ENCODE measurements at regions of chr2 and their contacts with region 1.

Region 1: GRCh38 chr2:32946314-32947075 is at the start of gene LTBP1:
- DNase-seq: peak in 9 of 10 donors; percentile 49 to 84 (median 58)
- H3K4me3 ChIP-seq: peak within 1 kb of the TSS; percentile 48 to 87 (median 72)
- H3K27ac ChIP-seq: peak within 1 kb of the TSS in 46 of 59 donors; percentile 3 to 85 (median 64)
- H3K27me3 ChIP-seq: peaks cover 0 to 7% (median 0%) of the 10 kb centered on the region in 45 donors
- CTCF ChIP-seq: peak in 55 of 56 donors; percentile 28 to 84 (median 69)
- total RNA-seq, gene LTBP1: 6.9 to 47.1 (median 14.7) TPM

Region 2: GRCh38 chr2:32553829-32554432 is 392.6 kb before region 1 on chr2:
- intact Hi-C with region 1: loop called in 1 of 2 experiments (anchors 10 kb)
- DNase-seq: no peak
- H3K4me3 ChIP-seq: no peak overlapping the region
- H3K27ac ChIP-seq: peak overlapping the region in 13 of 59 donors; percentile 5 to 61 (median 33)
- H3K27me3 ChIP-seq: no peaks in the 10 kb centered on the region
- CTCF ChIP-seq: peak; percentile 66 to 96 (median 82)

Region 3: DNA sequence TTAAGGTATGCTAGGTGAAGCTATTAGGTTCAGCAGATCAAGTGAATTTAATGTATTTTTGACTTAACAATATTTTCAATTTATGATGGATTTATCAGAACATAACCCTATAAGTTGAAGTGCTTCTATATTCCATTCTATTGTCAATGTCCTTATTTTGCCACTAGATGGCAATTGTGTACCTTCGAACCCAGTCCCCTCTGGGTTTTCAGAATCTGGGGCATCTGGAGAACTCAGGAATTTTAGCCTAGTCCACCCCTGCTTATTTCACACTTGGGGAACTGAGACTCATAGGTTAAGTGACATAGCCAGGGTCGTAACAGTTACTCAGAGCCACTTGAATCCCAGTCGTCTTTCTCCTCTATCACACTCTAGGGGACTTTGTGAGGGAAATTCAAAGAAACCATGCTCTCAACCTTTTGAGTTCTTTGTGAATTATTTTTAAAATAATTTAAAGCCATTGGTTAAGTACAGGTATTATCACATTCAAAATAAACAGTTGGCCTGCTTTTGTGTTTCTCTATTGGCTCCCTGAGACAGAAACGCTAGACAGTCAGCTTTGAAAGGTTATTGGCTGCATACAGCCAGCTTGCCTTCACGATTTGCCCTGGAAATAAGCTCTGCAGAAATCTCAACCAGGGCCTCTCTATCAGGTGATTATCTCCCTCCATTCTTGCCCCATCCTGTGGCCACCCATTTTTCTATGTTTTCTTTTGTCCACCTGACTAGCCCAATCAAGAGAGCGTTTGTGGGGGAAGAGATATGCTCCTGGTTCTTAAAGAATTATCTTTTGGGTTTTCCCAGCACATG is 173.7 kb before region 1 on chr2:
- intact Hi-C with region 1: loop called (anchors 1 to 5 kb)
- DNase-seq: peak in 1 of 10 donors; percentile 16
- H3K4me3 ChIP-seq: no peak overlapping the region
- H3K27ac ChIP-seq: peak overlapping the region in 2 of 59 donors; percentile 24 to 32
- H3K27me3 ChIP-seq: no peaks in the 10 kb centered on the region
- CTCF ChIP-seq: peak; percentile 65 to 95 (median 85)

Region 4: DNA sequence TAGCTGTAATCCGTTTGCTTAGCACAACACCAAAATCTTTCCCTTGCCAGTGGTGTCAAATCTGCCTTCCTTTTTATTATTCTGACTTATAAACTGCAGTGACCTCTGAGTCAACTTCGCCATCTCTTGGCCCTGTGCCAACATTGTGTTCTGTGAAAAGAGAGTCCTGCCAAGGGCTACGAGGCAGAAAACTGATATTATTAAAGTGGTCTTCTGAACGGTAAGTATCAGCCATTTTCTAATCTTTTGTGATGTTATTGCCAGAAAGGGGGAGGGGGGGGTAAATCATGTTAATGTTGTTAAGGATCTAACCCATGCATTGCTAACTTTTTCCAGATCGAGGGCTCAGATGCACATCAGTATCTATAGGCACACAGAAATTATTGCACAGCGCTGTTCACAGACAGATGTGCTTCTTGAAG is 121.2 kb before region 1 on chr2:
- intact Hi-C with region 1: loop called in 1 of 2 experiments (anchors 5 kb)
- DNase-seq: peak in 4 of 10 donors; percentile 28 to 65 (median 50)
- H3K4me3 ChIP-seq: peak overlapping the region in 49 of 59 donors; percentile 9 to 65 (median 34)
- H3K27ac ChIP-seq: peak overlapping the region in 57 of 59 donors; percentile 3 to 92 (median 79)
- H3K27me3 ChIP-seq: no peaks in the 10 kb centered on the region
- CTCF ChIP-seq: peak in 1 of 56 donors; percentile 15

Region 5: GRCh38 chr2:32882816-32883810 is 63.4 kb before region 1 on chr2:
- intact Hi-C with region 1: loop called in 1 of 2 experiments (anchors 5 kb)
- DNase-seq: no peak
- H3K4me3 ChIP-seq: peak overlapping the region in 1 of 59 donors; percentile 17
- H3K27ac ChIP-seq: no peak overlapping the region
- H3K27me3 ChIP-seq: no peaks in the 10 kb centered on the region
- CTCF ChIP-seq: no peak

Region 6: GRCh38 chr2:32993005-32993539 is 46.6 kb after region 1 on chr2:
- intact Hi-C with region 1: no loop called
- DNase-seq: no peak
- H3K4me3 ChIP-seq: no peak overlapping the region
- H3K27ac ChIP-seq: no peak overlapping the region
- H3K27me3 ChIP-seq: no peaks in the 10 kb centered on the region
- CTCF ChIP-seq: no peak

Region 7: GRCh38 chr2:33023728-33024500 is 77.4 kb after region 1 on chr2:
- intact Hi-C with region 1: no loop called
- DNase-seq: no peak
- H3K4me3 ChIP-seq: no peak overlapping the region
- H3K27ac ChIP-seq: no peak overlapping the region
- H3K27me3 ChIP-seq: peaks cover 0 to 2% (median 0%) of the 10 kb centered on the region in 45 donors
- CTCF ChIP-seq: no peak

Region 8: GRCh38 chr2:33599175-33599942 is 652.9 kb after region 1 on chr2 and contains the start of gene FAM98A:
- intact Hi-C with region 1: loop called in 1 of 2 experiments (anchors 10 kb)
- DNase-seq: peak; percentile 96 to 99 (median 98)
- H3K4me3 ChIP-seq: peak within 1 kb of the TSS; percentile 68 to 99 (median 93)
- H3K27ac ChIP-seq: peak within 1 kb of the TSS; percentile 7 to 95 (median 84)
- H3K27me3 ChIP-seq: no peaks in the 10 kb centered on the region
- CTCF ChIP-seq: peak in 53 of 56 donors; percentile 12 to 69 (median 43)
- total RNA-seq, gene FAM98A: 32.7 to 127 (median 73.1) TPM

Measured in dorsolateral prefrontal cortex (tissue), 120 donors.